WTC11 (cell line): ENCODE measurements at regions of chr9 and their contacts with region 1.

Region 1: GRCh38 chr9:7358876-7359275 is 440.7 kb downstream of the DMAC1 start:
- DNase-seq: peak; percentile 14
- ATAC-seq: peak; percentile 75
- H3K4me3 Mint-ChIP-seq: no peak overlapping the region
- H3K27ac Mint-ChIP-seq: no peak overlapping the region
- H3K4me1 Mint-ChIP-seq: peaks cover 8% of the 10 kb centered on the region
- H3K27me3 Mint-ChIP-seq: no peaks in the 10 kb centered on the region
- CTCF ChIP-seq: no peak

Region 2: DNA sequence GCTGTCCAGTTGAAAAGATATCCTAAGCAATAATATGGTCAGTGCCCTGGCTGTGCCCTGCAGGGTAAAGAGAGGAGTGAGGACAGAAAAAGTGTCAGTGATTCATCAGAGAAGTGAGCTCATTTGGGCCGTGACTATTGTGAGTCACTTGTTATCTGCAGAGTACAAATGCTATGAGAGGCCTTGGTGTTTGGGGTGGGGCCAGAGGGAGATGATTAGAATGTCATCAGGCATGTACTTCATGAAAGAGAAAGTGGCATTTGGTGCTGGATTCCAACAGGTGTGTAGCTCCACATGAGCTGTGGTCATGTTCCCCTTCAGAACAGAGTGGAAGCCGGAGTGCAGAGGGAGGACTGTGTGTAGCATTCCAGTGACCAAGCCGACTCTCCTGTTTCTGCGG is 427.0 kb before region 1 on chr9:
- CTCF ChIA-PET with region 1: no interaction called
- POLR2A ChIA-PET with region 1: no interaction called
- DNase-seq: no peak
- ATAC-seq: no peak
- H3K4me3 Mint-ChIP-seq: no peak overlapping the region
- H3K27ac Mint-ChIP-seq: peak overlapping the region; percentile 14; the same call in 1 of the 2 replicates
- H3K4me1 Mint-ChIP-seq: peaks cover 16% of the 10 kb centered on the region
- H3K27me3 Mint-ChIP-seq: no peaks in the 10 kb centered on the region
- CTCF ChIP-seq: no peak

Region 3: GRCh38 chr9:7055201-7055903 is 303.5 kb before region 1 on chr9:
- CTCF ChIA-PET with region 1: interaction called, 20 read pairs
- POLR2A ChIA-PET with region 1: no interaction called
- DNase-seq: no peak
- ATAC-seq: no peak
- H3K4me3 Mint-ChIP-seq: no peak overlapping the region
- H3K27ac Mint-ChIP-seq: no peak overlapping the region
- H3K4me1 Mint-ChIP-seq: peaks cover 31% of the 10 kb centered on the region
- H3K27me3 Mint-ChIP-seq: no peaks in the 10 kb centered on the region
- CTCF ChIP-seq: no peak

Region 4: GRCh38 chr9:7212101-7212500 is 146.8 kb before region 1 on chr9:
- CTCF ChIA-PET with region 1: interaction called, 10 read pairs
- POLR2A ChIA-PET with region 1: no interaction called
- DNase-seq: no peak
- ATAC-seq: no peak
- H3K4me3 Mint-ChIP-seq: no peak overlapping the region
- H3K27ac Mint-ChIP-seq: no peak overlapping the region
- H3K4me1 Mint-ChIP-seq: peaks cover 40% of the 10 kb centered on the region
- H3K27me3 Mint-ChIP-seq: peaks cover 52% of the 10 kb centered on the region
- CTCF ChIP-seq: no peak

Region 5: GRCh38 chr9:7303907-7304626 is 54.8 kb before region 1 on chr9:
- CTCF ChIA-PET with region 1: no interaction called
- POLR2A ChIA-PET with region 1: no interaction called
- DNase-seq: no peak
- ATAC-seq: no peak
- H3K4me3 Mint-ChIP-seq: no peak overlapping the region
- H3K27ac Mint-ChIP-seq: no peak overlapping the region
- H3K4me1 Mint-ChIP-seq: no peaks in the 10 kb centered on the region
- H3K27me3 Mint-ChIP-seq: no peaks in the 10 kb centered on the region; the same call in 1 of the 2 replicates
- CTCF ChIP-seq: no peak

Region 6: DNA sequence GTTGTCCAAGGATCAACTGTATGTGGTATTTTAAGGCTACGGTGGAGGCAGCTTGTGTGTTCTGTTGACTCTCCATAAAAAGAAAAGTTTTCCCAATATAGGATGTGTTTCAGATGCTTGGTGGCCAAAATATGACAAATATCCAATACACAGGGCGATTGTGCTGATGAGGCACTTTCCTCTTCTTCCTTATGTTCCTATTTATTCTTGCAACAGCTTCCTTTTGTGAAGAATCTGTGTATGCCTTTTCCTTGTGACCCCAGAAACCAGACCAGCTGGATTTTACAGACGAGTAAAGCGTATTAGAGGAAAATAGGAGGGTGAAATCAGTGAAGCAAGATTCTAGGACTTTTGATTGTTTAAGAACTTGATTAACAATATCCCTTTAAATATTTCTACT is 11.3 kb before region 1 on chr9:
- CTCF ChIA-PET with region 1: interaction called, 42 read pairs
- POLR2A ChIA-PET with region 1: no interaction called
- DNase-seq: no peak
- ATAC-seq: no peak
- H3K4me3 Mint-ChIP-seq: no peak overlapping the region
- H3K27ac Mint-ChIP-seq: no peak overlapping the region
- H3K4me1 Mint-ChIP-seq: no peaks in the 10 kb centered on the region
- H3K27me3 Mint-ChIP-seq: no peaks in the 10 kb centered on the region
- CTCF ChIP-seq: no peak

Region 7: DNA sequence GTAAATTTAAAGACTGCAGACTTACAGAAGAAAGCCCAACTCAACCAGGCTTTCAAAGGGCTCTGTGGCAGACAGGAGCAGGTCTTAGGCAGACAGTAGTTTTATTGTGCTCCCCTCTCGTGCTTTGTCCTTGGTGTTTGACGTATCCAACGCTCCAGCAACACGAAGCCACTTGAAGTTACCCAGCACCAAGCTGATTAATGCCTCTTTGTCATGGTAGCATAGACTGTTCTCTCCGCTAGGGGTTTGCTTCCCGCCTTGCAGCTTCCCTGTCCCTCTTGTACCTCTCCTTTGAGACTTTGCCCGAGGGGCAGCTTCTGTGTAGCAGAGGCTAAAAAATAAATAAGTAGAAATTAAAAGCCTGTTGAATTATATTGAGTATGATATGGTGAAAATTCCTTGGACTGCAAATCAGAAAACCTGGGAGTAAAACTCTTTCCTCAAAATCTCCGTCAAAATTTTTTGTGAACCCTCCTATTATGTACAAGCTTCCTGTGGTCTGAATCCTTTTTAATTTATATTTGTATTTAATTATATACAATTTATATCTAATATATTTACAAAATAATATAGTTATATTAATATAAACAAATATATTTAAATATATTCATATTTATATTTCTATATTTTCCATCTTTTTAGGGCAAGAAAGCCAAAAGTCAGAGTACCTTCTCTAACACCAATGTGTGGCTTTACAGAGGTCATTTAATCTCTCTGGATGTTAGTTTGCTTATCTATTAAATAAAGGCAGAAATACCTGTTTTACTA is 35.3 kb after region 1 on chr9:
- CTCF ChIA-PET with region 1: interaction called, 22 read pairs
- POLR2A ChIA-PET with region 1: no interaction called
- DNase-seq: peak; percentile 18
- ATAC-seq: peak; percentile 98
- H3K4me3 Mint-ChIP-seq: no peak overlapping the region
- H3K27ac Mint-ChIP-seq: no peak overlapping the region
- H3K4me1 Mint-ChIP-seq: peaks cover 7% of the 10 kb centered on the region
- H3K27me3 Mint-ChIP-seq: no peaks in the 10 kb centered on the region
- CTCF ChIP-seq: no peak